Naive thymus-derived CD4-positive, alpha-beta T cell (primary cell): ENCODE measurements at regions of chr12 and their contacts with region 1.

Region 1: DNA sequence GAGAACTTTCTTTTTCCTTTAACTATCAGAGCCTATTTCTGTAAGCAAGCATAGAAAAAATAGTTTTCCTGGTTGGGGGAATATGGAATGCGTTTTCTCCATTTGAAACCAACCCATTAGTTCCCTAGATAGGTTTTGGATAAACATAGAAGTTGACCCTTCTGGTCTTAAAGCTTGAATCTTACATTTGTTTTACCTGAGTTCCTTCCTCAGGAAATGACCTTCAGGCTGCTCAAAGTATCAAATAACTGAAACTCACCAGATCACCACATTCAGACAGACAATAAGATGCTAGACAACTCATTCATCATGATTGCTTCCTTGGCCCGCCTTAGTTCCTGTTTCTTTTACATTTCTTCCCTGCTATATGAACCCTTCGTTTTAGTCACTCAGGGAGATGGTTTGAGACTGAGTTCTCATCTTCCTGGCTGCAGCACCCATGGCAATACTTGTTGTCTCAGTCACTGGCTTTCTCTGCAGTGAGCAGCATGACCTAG is 52.2 kb downstream of the LRP6 start:
- DNase-seq: no peak
- ATAC-seq: no peak
- H3K4me3 ChIP-seq: no peak overlapping the region
- H3K4me3 Mint-ChIP-seq: no peak overlapping the region
- H3K27ac ChIP-seq: no peak overlapping the region
- H3K27ac Mint-ChIP-seq: peak overlapping the region in 3 of 9 donors; percentile 15 to 43 (median 17)
- H3K4me1 ChIP-seq: peaks cover 0 to 12% of the 10 kb centered on the region in 2 donors
- H3K4me1 Mint-ChIP-seq: peaks cover 22 to 67% (median 47%) of the 10 kb centered on the region in 7 donors
- H3K27me3 ChIP-seq: no peaks in the 10 kb centered on the region
- H3K27me3 Mint-ChIP-seq: peaks cover 0 to 45% (median 0%) of the 10 kb centered on the region in 5 donors

Region 2: GRCh38 chr12:10910380-10910779 is 1304.3 kb before region 1 on chr12:
- CTCF ChIA-PET with region 1: no interaction called
- POLR2A ChIA-PET with region 1: no interaction called
- intact Hi-C with region 1: loop called in 1 of 2 experiments (anchors 10 kb)
- DNase-seq: no peak
- ATAC-seq: no peak
- H3K4me3 ChIP-seq: no peak overlapping the region
- H3K4me3 Mint-ChIP-seq: no peak overlapping the region
- H3K27ac ChIP-seq: no peak overlapping the region
- H3K27ac Mint-ChIP-seq: no peak overlapping the region
- H3K4me1 ChIP-seq: no peaks in the 10 kb centered on the region
- H3K4me1 Mint-ChIP-seq: peaks cover 0 to 2% (median 0%) of the 10 kb centered on the region in 7 donors
- H3K27me3 ChIP-seq: no peaks in the 10 kb centered on the region
- H3K27me3 Mint-ChIP-seq: no peaks in the 10 kb centered on the region

Region 3: GRCh38 chr12:12138203-12139154 is 76.2 kb before region 1 on chr12:
- CTCF ChIA-PET with region 1: no interaction called
- POLR2A ChIA-PET with region 1: no interaction called
- intact Hi-C with region 1: no loop called
- DNase-seq: no peak
- ATAC-seq: no peak
- H3K4me3 ChIP-seq: no peak overlapping the region
- H3K4me3 Mint-ChIP-seq: no peak overlapping the region
- H3K27ac ChIP-seq: no peak overlapping the region
- H3K27ac Mint-ChIP-seq: no peak overlapping the region
- H3K4me1 ChIP-seq: no peaks in the 10 kb centered on the region
- H3K4me1 Mint-ChIP-seq: peaks cover 0 to 6% (median 0%) of the 10 kb centered on the region in 7 donors
- H3K27me3 ChIP-seq: no peaks in the 10 kb centered on the region
- H3K27me3 Mint-ChIP-seq: peaks cover 0 to 19% (median 0%) of the 10 kb centered on the region in 5 donors

Region 4: DNA sequence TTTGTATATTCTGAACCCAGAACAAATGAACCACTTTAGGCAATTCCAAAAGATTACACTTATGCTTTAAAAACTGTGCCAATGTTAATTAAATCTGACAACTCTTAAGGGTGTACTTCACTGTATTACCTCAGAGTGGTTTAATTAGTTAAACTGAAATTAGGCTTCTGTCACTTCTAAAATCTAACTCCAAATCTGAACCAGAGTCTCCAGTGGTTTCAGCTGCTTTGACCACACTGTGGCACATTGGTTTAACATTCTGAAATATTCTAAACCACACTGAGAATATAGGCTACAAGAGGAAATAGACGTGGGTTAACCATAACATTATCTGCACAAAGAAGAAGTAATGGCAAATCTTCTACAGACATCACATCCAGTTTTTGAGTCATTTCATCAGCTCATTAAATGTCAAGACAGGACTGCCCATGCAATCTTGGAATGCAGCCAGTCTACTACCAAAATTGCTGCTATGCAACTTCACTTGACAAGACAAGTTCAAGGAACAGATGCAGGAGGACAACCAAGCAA is 42.6 kb before region 1 on chr12:
- CTCF ChIA-PET with region 1: no interaction called
- POLR2A ChIA-PET with region 1: no interaction called
- intact Hi-C with region 1: no loop called
- DNase-seq: no peak
- ATAC-seq: peak; percentile 37
- H3K4me3 ChIP-seq: no peak overlapping the region
- H3K4me3 Mint-ChIP-seq: no peak overlapping the region
- H3K27ac ChIP-seq: no peak overlapping the region
- H3K27ac Mint-ChIP-seq: no peak overlapping the region
- H3K4me1 ChIP-seq: peaks cover 0 to 5% of the 10 kb centered on the region in 2 donors
- H3K4me1 Mint-ChIP-seq: peaks cover 7 to 15% (median 11%) of the 10 kb centered on the region in 7 donors
- H3K27me3 ChIP-seq: peaks cover 0 to 4% of the 10 kb centered on the region in 2 donors
- H3K27me3 Mint-ChIP-seq: peaks cover 0 to 63% (median 0%) of the 10 kb centered on the region in 5 donors